ENCODE measurements at regions of chr16 and their contacts with region 1.

Region 1: GRCh38 chr16:54696522-54696921 is 234.1 kb upstream of the IRX5 start:
- DNase-seq: no peak
- ATAC-seq: no peak
- H3K4me3 ChIP-seq: no peak overlapping the region
- H3K27ac ChIP-seq: no peak overlapping the region
- H3K4me1 ChIP-seq: no peaks in the 10 kb centered on the region
- H3K27me3 ChIP-seq: no peaks in the 10 kb centered on the region
- CTCF ChIP-seq: no peak

Region 2: DNA sequence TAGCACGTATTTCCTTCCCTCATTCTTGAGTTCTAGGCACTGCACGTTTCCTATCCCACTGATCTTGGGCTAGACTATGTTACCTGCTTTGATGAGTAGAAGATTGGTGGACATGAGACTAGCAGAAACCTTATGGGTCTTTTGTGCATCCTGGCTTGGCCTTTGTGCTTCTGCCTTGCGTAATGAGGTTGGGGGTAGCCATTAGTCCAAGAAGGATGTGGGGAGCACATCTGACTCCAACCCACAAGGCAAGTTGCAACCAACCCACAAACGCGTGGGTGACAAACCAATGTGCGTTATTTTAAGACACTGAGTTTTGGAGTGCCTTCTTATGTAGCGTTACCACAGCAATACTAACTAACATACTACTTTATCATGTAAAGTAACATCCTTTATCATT is 53.7 kb after region 1 on chr16:
- intact Hi-C with region 1: loop called in 1 of 10 experiments (anchors 10 kb)
- DNase-seq: no peak
- ATAC-seq: no peak
- H3K4me3 ChIP-seq: no peak overlapping the region
- H3K27ac ChIP-seq: no peak overlapping the region
- H3K4me1 ChIP-seq: no peaks in the 10 kb centered on the region
- H3K27me3 ChIP-seq: peaks cover 0 to 6% (median 0%) of the 10 kb centered on the region in 7 donors
- CTCF ChIP-seq: no peak